Activated CD4-positive, alpha-beta T cell treated with anti-CD3 and anti-CD28 coated beads, Interleukin-2, amount 10 ng/mL, durations not matched to agents 24 days and 14 days (primary cell): ENCODE measurements at regions of chr18 and their contacts with region 1.

Region 1: GRCh38 chr18:9474983-9475642 is at the start of gene RALBP1:
- DNase-seq: peak; percentile 100
- H3K4me3 Mint-ChIP-seq: peak within 1 kb of the TSS; percentile 83
- H3K27ac Mint-ChIP-seq: peak within 1 kb of the TSS; percentile 96
- H3K4me1 Mint-ChIP-seq: peaks cover 25% of the 10 kb centered on the region
- H3K27me3 Mint-ChIP-seq: peaks cover 12% of the 10 kb centered on the region
- total RNA-seq, gene RALBP1: 38.9 and 41.3 TPM in 2 replicates

Region 2: GRCh38 chr18:8468921-8469335 is 1006.2 kb before region 1 on chr18:
- intact Hi-C with region 1: no loop called
- DNase-seq: no peak
- H3K4me3 Mint-ChIP-seq: no peak overlapping the region
- H3K27ac Mint-ChIP-seq: no peak overlapping the region
- H3K4me1 Mint-ChIP-seq: no peaks in the 10 kb centered on the region
- H3K27me3 Mint-ChIP-seq: no peaks in the 10 kb centered on the region

Region 3: GRCh38 chr18:8704361-8705279 is 770.5 kb before region 1 on chr18:
- intact Hi-C with region 1: loop called (anchors 2 kb)
- DNase-seq: peak; percentile 96
- H3K4me3 Mint-ChIP-seq: peak overlapping the region; percentile 95
- H3K27ac Mint-ChIP-seq: peak overlapping the region; percentile 72
- H3K4me1 Mint-ChIP-seq: peaks cover 9% of the 10 kb centered on the region
- H3K27me3 Mint-ChIP-seq: peaks cover 69% of the 10 kb centered on the region

Region 4: GRCh38 chr18:9082711-9083510 is 392.2 kb before region 1 on chr18:
- intact Hi-C with region 1: loop called (anchors 5 kb)
- DNase-seq: peak; percentile 86
- H3K4me3 Mint-ChIP-seq: peak overlapping the region; percentile 73
- H3K27ac Mint-ChIP-seq: peak overlapping the region; percentile 97
- H3K4me1 Mint-ChIP-seq: peaks cover 40% of the 10 kb centered on the region
- H3K27me3 Mint-ChIP-seq: no peaks in the 10 kb centered on the region

Region 5: DNA sequence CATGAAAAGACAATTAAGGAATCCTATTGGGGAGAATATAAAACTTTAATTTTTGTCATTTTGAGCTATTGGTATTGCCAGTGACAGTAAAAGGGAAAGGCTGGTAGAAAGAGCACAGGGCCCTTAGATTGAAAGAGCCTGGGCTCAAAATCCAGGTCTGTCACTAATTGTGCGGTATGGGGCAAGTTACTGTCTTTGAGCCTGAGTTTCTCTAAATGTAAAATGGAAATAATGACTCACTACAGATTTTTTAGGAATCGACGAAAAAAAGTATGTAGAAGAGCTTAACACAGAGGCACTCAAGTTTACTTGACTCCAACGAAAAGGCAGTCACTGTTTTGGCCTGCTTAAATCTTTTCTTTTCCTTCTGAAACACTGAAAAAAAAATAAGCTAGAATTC is 365.6 kb before region 1 on chr18:
- intact Hi-C with region 1: loop called (anchors 5 kb)
- DNase-seq: no peak
- H3K4me3 Mint-ChIP-seq: peak overlapping the region; percentile 58
- H3K27ac Mint-ChIP-seq: peak overlapping the region; percentile 81
- H3K4me1 Mint-ChIP-seq: peaks cover 66% of the 10 kb centered on the region
- H3K27me3 Mint-ChIP-seq: no peaks in the 10 kb centered on the region

Region 6: DNA sequence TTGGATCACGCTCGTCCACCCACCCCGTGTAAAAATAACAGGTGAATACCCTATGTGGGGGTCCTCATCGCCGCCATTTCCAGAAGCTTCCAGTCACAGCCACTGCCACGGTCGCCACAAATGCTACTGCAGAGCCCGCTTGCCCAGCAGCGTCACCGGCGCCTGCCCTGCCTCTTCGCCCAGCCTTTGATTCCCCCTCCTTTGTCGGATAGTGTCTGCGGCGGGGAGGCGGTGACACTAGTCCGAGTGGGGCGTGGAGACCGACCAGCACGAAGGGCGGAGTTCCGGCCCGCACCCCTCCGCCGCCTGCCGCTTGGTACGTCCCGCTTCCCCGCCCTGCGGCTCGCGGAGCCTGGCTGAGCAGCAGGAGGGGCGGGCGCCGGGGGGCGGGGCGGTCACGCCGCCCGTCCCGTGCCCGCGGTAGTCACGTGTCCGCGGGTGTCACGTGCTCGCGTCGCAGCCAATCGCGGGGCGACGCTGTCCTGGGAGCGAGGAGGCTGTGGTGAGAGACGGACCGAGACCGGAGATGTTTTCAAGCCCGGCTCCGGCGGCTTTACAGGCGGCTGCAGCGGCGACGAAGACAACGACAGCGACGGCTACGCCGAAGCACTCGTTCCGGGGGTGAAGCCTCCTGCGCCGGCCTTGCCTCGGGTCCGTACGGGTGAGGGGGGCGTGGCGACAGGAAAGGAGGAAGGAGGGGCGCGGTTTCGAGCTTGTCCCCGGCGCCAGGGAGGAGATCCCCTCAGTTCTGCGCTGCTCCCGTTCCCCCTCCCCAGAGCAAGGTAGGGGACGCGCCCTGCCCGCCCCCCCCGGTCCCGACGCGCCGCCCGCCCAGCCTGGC is 338.6 kb before region 1 on chr18 and contains the start of gene ANKRD12:
- intact Hi-C with region 1: loop called (anchors 1 kb)
- DNase-seq: peak; percentile 100
- H3K4me3 Mint-ChIP-seq: peak within 1 kb of the TSS; percentile 94
- H3K27ac Mint-ChIP-seq: peak within 1 kb of the TSS; percentile 99
- H3K4me1 Mint-ChIP-seq: peaks cover 54% of the 10 kb centered on the region
- H3K27me3 Mint-ChIP-seq: no peaks in the 10 kb centered on the region
- total RNA-seq, gene ANKRD12: 60.8 TPM in 2 replicates

Region 7: GRCh38 chr18:9516437-9517064 is 41.4 kb after region 1 on chr18:
- intact Hi-C with region 1: loop called (anchors 5 kb)
- DNase-seq: peak; percentile 73
- H3K4me3 Mint-ChIP-seq: no peak overlapping the region
- H3K27ac Mint-ChIP-seq: no peak overlapping the region
- H3K4me1 Mint-ChIP-seq: peaks cover 2% of the 10 kb centered on the region
- H3K27me3 Mint-ChIP-seq: no peaks in the 10 kb centered on the region

Region 8: DNA sequence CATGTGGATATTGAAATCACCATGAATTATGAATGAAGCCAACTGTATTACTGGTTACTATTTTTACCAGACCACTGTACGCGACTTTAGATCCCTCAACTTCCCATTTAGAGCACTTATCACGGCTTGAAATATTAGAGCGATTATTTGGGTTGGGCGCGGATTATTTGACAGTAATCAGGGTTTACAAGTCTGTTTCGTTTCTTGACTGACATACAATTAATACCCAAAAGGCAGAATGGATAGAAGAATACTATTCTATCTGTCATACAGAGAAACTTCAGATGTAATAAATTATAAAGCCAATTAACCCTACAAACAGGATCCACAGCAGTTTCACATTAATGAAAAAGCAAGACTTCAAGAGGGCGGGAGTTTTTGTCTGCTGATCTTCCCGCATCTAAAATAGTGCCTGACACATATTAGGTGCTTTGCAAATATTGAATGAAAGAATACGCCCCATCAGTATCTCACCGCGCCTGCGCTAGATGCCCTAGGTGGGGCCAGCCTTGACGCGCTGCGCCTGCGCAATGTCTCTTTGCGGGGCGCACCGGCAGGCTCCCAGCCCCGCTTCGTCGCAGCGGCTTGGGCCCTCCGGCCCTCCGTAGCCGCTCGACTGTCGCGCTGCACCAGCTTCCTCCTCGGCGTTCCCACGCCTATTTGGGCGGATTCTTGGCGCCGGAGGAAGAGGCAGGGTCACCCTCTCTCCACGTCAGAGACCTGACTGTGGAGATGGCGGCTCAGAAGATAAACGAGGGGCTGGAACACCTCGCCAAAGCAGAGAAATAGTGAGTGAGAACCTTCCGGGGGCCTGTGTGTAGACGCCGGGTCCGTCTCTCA is 1050.5 kb after region 1 on chr18 and contains the start of gene NAPG:
- intact Hi-C with region 1: loop called (anchors 10 kb)
- DNase-seq: peak; percentile 98
- H3K4me3 Mint-ChIP-seq: peak within 1 kb of the TSS; percentile 96
- H3K27ac Mint-ChIP-seq: peak within 1 kb of the TSS; percentile 98
- H3K4me1 Mint-ChIP-seq: peaks cover 41% of the 10 kb centered on the region
- H3K27me3 Mint-ChIP-seq: peaks cover 8% of the 10 kb centered on the region
- total RNA-seq, gene NAPG: 36.4 and 38.7 TPM in 2 replicates